CD8-positive, alpha-beta T cell (primary cell): ENCODE measurements at regions of chr14 and their contacts with region 1.

Region 1: GRCh38 chr14:22852940-22853767 is 16.8 kb downstream of the MMP14 start:
- DNase-seq: peak; percentile 83 to 96 (median 88)
- ATAC-seq: peak; percentile 96
- H3K4me3 ChIP-seq: peak overlapping the region; percentile 58 to 96
- H3K4me3 Mint-ChIP-seq: peak overlapping the region; percentile 83
- H3K27ac ChIP-seq: no peak overlapping the region
- H3K27ac Mint-ChIP-seq: peak overlapping the region; percentile 41
- H3K4me1 ChIP-seq: peaks cover 10% of the 10 kb centered on the region
- H3K4me1 Mint-ChIP-seq: peaks cover 9% of the 10 kb centered on the region
- H3K27me3 ChIP-seq: peaks cover 0 to 8% of the 10 kb centered on the region in 2 experiments
- H3K27me3 Mint-ChIP-seq: peaks cover 15% of the 10 kb centered on the region
- CTCF ChIP-seq: peak; percentile 86

Region 2: DNA sequence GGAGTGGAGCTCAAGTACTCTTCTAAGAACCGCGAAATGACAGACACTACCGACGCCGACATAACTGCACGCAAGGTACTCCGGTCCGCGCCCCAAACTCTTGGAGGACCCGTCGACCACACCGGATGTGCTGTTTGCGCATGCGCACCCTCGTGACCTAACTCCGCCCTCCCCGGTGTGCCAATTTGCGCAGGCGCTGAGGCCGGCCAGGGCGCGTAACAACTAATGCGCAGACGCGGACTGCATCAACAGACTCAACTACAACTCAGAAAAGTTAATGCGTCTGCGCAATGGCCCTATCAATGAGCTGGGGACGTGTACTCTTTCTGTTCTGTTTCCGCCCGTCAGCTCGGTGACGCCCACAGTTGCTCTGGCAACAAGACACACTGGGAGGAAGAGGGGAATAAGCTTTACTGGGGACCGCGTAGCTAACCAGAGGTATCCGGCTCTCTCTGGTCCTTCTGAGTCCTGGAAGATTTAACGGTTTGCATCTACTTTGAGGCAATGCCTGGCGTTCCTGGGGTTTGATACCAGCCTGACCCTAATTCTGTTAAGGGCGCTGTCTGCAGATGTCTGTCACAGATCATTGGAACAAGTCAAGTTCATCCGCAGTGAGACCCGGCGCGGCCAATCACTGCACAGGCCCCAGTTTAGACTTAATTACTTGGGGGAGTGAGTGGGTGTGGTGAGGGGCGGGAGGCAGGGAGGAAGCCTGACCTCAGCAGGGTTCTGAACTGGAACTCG is 263.9 kb before region 1 on chr14 and contains the start of gene DAD1:
- CTCF ChIA-PET with region 1: interaction called, 5 read pairs
- POLR2A ChIA-PET with region 1: no interaction called
- intact Hi-C with region 1: loop called in 1 of 2 experiments (anchors 5 kb)
- DNase-seq: peak; percentile 99 to 100 (median 100)
- ATAC-seq: peak; percentile 86
- H3K4me3 ChIP-seq: peak within 1 kb of the TSS; percentile 64 to 67
- H3K4me3 Mint-ChIP-seq: peak within 1 kb of the TSS; percentile 98
- H3K27ac ChIP-seq: peak within 1 kb of the TSS; percentile 95 to 99
- H3K27ac Mint-ChIP-seq: peak within 1 kb of the TSS; percentile 100
- H3K4me1 ChIP-seq: peaks cover 47% of the 10 kb centered on the region
- H3K4me1 Mint-ChIP-seq: peaks cover 49% of the 10 kb centered on the region
- H3K27me3 ChIP-seq: no peaks in the 10 kb centered on the region
- H3K27me3 Mint-ChIP-seq: no peaks in the 10 kb centered on the region
- CTCF ChIP-seq: no peak
- total RNA-seq, gene DAD1: 27.2 to 35.6 TPM

Region 3: DNA sequence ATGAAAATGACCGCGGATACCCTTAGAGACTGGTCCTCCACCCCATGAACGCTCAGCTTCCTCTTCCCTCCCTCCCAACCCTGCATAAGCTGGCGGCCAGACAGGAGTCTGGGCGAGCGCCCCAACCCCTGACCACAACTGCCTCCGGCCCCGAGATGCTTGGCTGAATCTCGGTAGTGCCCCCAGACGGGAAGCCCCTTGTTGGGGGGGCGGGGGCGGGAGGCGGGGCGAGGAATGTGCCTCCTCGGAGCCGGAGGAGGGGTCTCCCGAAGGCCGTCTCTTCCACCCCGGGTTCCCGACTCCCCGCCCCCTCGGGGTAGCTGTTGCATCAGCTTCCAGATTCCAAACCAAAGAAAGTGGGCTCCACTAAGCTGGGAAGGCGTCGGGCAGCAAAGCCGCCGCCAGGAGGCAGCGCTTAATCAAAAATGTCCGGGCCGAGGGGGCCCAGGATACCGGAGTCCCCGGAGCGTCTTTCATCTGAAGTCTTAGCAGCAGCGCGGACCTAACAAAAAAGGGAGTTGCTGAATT is 30.5 kb before region 1 on chr14:
- CTCF ChIA-PET with region 1: interaction called, 432 read pairs
- POLR2A ChIA-PET with region 1: interaction called, 9 read pairs
- intact Hi-C with region 1: loop called (anchors 1 kb)
- DNase-seq: peak; percentile 41 to 85 (median 76)
- ATAC-seq: peak; percentile 89
- H3K4me3 ChIP-seq: peak overlapping the region; percentile 26 to 35
- H3K4me3 Mint-ChIP-seq: peak overlapping the region; percentile 61
- H3K27ac ChIP-seq: no peak overlapping the region
- H3K27ac Mint-ChIP-seq: no peak overlapping the region
- H3K4me1 ChIP-seq: peaks cover 10% of the 10 kb centered on the region
- H3K4me1 Mint-ChIP-seq: peaks cover 16% of the 10 kb centered on the region
- H3K27me3 ChIP-seq: peaks cover 4 to 21% of the 10 kb centered on the region in 2 experiments
- H3K27me3 Mint-ChIP-seq: peaks cover 23% of the 10 kb centered on the region
- CTCF ChIP-seq: peak; percentile 81

Region 4: DNA sequence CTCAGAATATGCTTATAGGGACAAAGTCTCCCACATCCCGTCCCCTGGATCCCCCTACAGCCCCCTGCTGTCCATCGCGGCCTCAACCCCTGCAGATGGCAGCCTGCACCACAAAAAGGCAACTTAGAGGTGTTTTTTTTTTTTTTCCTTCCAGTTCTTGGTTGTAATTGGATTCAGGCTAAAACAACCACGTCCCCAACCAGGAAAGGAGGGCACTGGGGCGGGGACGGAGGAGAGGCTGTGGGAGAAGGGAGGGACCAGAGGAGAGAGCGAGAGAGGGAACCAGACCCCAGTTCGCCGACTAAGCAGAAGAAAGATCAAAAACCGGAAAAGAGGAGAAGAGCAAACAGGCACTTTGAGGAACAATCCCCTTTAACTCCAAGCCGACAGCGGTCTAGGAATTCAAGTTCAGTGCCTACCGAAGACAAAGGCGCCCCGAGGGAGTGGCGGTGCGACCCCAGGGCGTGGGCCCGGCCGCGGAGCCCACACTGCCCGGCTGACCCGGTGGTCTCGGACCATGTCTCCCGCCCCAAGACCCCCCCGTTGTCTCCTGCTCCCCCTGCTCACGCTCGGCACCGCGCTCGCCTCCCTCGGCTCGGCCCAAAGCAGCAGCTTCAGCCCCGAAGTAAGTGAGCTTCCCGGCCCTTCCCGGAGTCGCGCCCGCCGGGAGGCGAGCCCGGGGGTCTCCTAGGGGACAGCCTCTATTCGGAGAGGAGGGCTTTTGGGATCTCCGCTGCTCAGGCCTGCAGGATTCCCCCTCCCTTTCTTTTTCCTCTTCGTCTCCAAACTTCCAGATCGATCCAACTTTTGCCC is 16.6 kb before region 1 on chr14 and contains the start of gene MMP14:
- CTCF ChIA-PET with region 1: interaction called, 432 read pairs
- POLR2A ChIA-PET with region 1: interaction called, 9 read pairs
- intact Hi-C with region 1: no loop called
- DNase-seq: no peak
- ATAC-seq: no peak
- H3K4me3 ChIP-seq: peak within 1 kb of the TSS; percentile 41 to 46
- H3K4me3 Mint-ChIP-seq: peak within 1 kb of the TSS; percentile 85
- H3K27ac ChIP-seq: no peak within 1 kb of the TSS
- H3K27ac Mint-ChIP-seq: peak within 1 kb of the TSS; percentile 50
- H3K4me1 ChIP-seq: peaks cover 19% of the 10 kb centered on the region
- H3K4me1 Mint-ChIP-seq: peaks cover 15% of the 10 kb centered on the region
- H3K27me3 ChIP-seq: peaks cover 0 to 9% of the 10 kb centered on the region in 2 experiments
- H3K27me3 Mint-ChIP-seq: peaks cover 12% of the 10 kb centered on the region
- CTCF ChIP-seq: no peak
- total RNA-seq, gene MMP14: 1.4 TPM

Region 5: DNA sequence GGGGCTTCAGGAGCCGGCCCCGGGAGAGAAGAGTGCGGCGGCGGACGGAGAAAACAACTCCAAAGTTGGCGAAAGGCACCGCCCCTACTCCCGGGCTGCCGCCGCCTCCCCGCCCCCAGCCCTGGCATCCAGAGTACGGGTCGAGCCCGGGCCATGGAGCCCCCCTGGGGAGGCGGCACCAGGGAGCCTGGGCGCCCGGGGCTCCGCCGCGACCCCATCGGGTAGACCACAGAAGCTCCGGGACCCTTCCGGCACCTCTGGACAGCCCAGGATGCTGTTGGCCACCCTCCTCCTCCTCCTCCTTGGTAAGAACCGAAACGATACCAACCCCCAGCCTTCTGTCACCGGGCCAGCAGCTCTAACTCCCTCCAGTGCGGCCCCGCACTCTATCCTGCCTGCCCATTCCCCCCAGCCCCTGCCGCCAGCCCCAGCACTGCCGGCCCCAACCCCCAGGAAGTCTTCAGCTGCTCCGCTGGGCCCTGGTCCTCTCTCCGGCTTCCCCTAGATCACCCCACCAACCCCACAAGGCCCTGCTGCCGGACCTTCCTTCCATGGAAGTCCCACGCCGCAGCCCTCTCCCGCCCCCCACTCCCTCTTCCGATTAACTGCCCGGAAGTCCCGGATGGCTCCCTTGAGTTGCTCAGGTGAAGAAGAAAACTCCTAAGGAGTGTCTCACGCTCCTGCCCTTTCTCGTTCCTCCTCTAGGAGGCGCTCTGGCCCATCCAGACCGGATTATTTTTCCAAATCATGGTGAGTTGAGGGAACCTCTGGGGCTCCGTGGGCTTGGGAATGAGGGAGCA is 19.1 kb after region 1 on chr14:
- CTCF ChIA-PET with region 1: interaction called, 24 read pairs
- POLR2A ChIA-PET with region 1: interaction called, 4 read pairs
- intact Hi-C with region 1: loop called in 1 of 2 experiments (anchors 1 kb)
- DNase-seq: peak; percentile 47 to 82 (median 73)
- ATAC-seq: peak; percentile 46
- H3K4me3 ChIP-seq: peak overlapping the region; percentile 82 to 83
- H3K4me3 Mint-ChIP-seq: peak overlapping the region; percentile 91
- H3K27ac ChIP-seq: peak overlapping the region; percentile 85 to 94
- H3K27ac Mint-ChIP-seq: peak overlapping the region; percentile 99
- H3K4me1 ChIP-seq: peaks cover 28% of the 10 kb centered on the region
- H3K4me1 Mint-ChIP-seq: peaks cover 36% of the 10 kb centered on the region
- H3K27me3 ChIP-seq: no peaks in the 10 kb centered on the region
- H3K27me3 Mint-ChIP-seq: no peaks in the 10 kb centered on the region
- CTCF ChIP-seq: peak; percentile 86

Region 6: DNA sequence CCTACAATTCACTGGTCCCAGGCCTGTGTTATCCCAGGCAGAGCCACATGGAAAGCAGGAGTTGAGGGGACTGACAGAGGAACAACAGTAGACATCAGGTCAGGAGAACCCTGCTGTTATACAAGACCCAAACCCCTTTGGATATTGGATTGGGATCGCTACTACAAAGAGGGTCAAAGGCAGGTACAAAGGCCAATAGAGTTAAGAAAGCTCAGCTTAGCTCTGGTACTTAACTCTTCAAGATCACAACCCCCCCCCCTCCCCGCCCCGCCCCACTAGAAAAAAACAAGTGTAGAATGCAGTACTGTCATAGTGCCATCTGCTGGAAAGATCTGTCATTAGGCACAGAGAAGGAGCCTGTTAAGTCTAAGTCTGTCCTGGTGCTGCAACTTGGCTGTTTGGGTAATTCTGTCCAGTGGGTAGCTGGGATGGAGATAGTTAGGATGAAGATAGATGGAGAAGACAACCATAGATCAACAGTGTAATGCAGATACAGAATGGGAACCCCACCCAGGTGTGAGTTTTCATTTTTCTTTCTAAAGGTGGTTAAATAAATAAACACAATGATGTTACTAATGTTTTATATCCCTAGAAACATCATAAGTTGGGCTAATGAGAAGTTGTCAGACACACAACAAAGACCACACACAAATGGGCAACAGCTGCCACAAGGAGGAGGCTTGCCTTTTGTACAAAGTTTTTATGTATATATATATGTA is 47.1 kb after region 1 on chr14:
- CTCF ChIA-PET with region 1: interaction called, 60 read pairs
- POLR2A ChIA-PET with region 1: no interaction called
- intact Hi-C with region 1: loop called in 1 of 2 experiments (anchors 1 kb)
- DNase-seq: peak in 5 of 9 experiments; percentile 33 to 82 (median 48)
- ATAC-seq: peak; percentile 86
- H3K4me3 ChIP-seq: no peak overlapping the region
- H3K4me3 Mint-ChIP-seq: no peak overlapping the region
- H3K27ac ChIP-seq: no peak overlapping the region
- H3K27ac Mint-ChIP-seq: no peak overlapping the region
- H3K4me1 ChIP-seq: peaks cover 3% of the 10 kb centered on the region
- H3K4me1 Mint-ChIP-seq: peaks cover 6% of the 10 kb centered on the region
- H3K27me3 ChIP-seq: no peaks in the 10 kb centered on the region
- H3K27me3 Mint-ChIP-seq: no peaks in the 10 kb centered on the region
- CTCF ChIP-seq: peak; percentile 60